ENCODE measurements at regions of chr6 and their contacts with region 1.

Region 1: DNA sequence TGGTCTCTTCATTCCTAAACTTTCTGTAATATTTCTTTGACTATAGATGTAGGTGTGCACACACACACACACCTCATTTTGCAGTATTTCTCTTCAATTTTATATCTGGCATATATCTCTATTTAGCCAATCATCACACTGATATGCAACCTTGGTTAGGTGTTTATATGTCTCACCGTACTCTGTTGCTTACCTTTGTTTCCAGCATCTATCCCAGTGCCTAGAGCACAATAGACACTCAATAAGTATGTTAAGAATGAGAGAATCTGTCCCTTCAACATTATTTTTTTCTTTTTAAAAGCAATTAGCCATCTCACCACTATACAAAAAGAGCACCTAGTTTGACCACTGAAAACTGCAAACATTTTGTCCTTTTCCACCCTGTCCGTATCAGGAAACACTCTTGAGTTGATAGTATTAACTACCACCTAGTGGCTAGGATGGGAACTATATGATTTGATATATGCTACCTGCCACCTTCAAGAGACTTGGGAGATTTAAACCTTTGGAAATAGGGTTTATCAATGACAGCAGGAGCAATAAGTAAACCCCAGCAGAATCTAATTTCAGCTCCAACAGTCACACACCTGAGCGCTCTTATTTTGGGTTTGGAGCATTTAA is 48.7 kb upstream of the RSPO3 start:
- DNase-seq: peak; percentile 36
- ATAC-seq: peak; percentile 95
- H3K4me3 ChIP-seq: no peak overlapping the region
- H3K27ac ChIP-seq: no peak overlapping the region
- H3K4me1 ChIP-seq: no peaks in the 10 kb centered on the region
- H3K27me3 ChIP-seq: no peaks in the 10 kb centered on the region
- CTCF ChIP-seq: peak; percentile 40 to 61 (median 54); a peak in 5 of 6 replicates
- POLR2A ChIP-seq: no peak
- RAD21 ChIP-seq: peak; percentile 68

Region 2: DNA sequence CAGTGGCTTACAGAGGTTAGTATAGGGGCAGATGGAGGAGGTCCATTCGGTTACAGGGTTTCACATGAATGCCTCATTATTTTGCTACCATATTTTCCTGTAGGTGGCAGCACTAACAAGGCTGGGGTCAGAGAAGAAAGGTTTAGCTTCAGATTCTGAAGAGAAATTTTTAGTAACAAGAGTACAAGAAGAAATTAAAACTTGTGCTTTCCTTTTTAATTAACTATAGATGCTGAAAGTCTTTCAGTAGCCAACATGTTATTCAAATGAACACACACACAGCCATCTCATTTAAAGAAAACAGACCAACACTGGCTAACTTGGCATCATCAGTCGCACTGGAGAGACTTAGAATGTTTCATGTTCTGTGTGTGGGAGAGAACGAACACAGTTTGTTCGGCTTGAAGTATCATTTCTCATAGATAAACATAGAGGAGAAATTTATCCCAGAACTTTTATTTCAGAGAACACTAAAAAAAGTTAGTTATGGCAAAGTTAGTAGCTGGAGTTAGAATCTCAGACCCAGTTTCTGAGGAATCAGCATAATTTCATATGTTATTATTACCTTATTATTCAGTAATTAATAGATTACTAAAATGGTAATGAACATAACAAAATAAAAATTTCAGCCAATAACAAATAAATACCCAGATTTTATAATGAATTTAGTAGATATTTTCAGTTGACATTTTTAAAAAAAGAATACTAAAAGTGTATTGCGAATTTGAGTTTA is 265.3 kb before region 1 on chr6:
- CTCF ChIA-PET with region 1: no interaction called
- POLR2A ChIA-PET with region 1: no interaction called
- RAD21 ChIA-PET with region 1: no interaction called
- intact Hi-C with region 1: loop called (anchors 5 kb)
- DNase-seq: peak; percentile 19
- ATAC-seq: peak; percentile 93
- H3K4me3 ChIP-seq: no peak overlapping the region
- H3K27ac ChIP-seq: no peak overlapping the region
- H3K4me1 ChIP-seq: no peaks in the 10 kb centered on the region
- H3K27me3 ChIP-seq: peaks cover 37% of the 10 kb centered on the region
- CTCF ChIP-seq: peak; percentile 61 to 82 (median 69)
- POLR2A ChIP-seq: no peak
- RAD21 ChIP-seq: peak; percentile 71

Measured in HCT116 (cell line).